ENCODE measurements at regions of chr19 and their contacts with region 1.

Region 1: GRCh38 chr19:12551060-12551832 is at the start of gene ZNF564:
- DNase-seq: peak; percentile 93
- H3K4me3 Mint-ChIP-seq: peak within 1 kb of the TSS; percentile 94
- H3K27ac Mint-ChIP-seq: peak within 1 kb of the TSS; percentile 90
- H3K4me1 Mint-ChIP-seq: peaks cover 19% of the 10 kb centered on the region
- H3K27me3 Mint-ChIP-seq: no peaks in the 10 kb centered on the region
- total RNA-seq, gene ZNF564: 7.4 and 7.6 TPM in 2 replicates

Region 2: GRCh38 chr19:12294249-12295158 is 256.7 kb before region 1 on chr19 and contains the start of gene ZNF44:
- intact Hi-C with region 1: loop called (anchors 1 kb)
- DNase-seq: peak; percentile 96
- H3K4me3 Mint-ChIP-seq: peak within 1 kb of the TSS; percentile 100
- H3K27ac Mint-ChIP-seq: peak within 1 kb of the TSS; percentile 99
- H3K4me1 Mint-ChIP-seq: peaks cover 22% of the 10 kb centered on the region
- H3K27me3 Mint-ChIP-seq: no peaks in the 10 kb centered on the region
- total RNA-seq, gene ZNF44: 8.6 and 8.7 TPM in 2 replicates

Region 3: GRCh38 chr19:12440541-12441316 is 110.5 kb before region 1 on chr19 and contains the start of gene ZNF443:
- intact Hi-C with region 1: loop called (anchors 2 kb)
- DNase-seq: peak; percentile 99
- H3K4me3 Mint-ChIP-seq: peak within 1 kb of the TSS; percentile 100
- H3K27ac Mint-ChIP-seq: peak within 1 kb of the TSS; percentile 97
- H3K4me1 Mint-ChIP-seq: peaks cover 9% of the 10 kb centered on the region
- H3K27me3 Mint-ChIP-seq: no peaks in the 10 kb centered on the region
- total RNA-seq, gene ZNF443: 4.3 and 4.5 TPM in 2 replicates

Region 4: DNA sequence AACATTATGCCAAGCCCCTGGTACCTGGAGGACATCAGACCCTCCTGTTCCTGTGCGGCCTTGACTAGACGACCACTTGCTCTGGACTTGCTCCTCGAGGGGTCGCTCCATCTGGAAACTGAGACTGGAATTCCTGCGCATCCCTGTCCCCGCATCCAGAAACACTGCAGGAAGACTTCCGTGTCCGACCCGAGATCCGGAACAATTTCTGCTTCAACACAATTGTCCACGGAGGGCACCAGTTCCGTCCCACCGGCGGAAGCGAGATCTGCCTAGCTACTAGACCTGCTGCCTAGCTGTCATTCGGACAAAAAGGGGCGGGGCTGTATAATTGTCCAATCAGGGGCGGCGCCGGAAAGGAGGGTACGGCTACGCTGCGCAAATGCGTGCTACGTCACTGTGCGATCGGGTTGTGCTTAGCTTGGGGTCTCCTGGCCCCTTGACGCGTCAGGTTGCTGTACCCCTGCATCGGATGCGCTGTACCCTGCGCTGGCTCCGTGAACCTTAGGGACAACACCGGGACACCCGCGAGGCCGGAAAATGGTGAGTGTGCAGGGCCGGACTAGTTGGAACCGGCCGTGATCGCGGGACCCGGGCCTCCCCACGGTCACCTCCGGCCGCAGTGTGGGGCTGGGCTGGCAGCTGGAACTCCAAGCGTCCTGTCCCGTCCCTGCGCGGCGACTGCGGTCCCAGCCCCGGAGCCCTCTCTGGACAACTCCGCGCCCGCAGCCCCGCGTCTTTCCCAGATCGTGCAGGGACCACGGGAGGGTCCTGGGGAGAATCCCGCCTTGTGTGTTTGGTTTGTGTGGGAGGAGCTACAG is 59.5 kb after region 1 on chr19 and contains the starts of genes ZNF490 and ZNF791:
- intact Hi-C with region 1: loop called (anchors 2 kb)
- DNase-seq: peak; percentile 95
- H3K4me3 Mint-ChIP-seq: peak within 1 kb of the TSS; percentile 99
- H3K27ac Mint-ChIP-seq: peak within 1 kb of the TSS; percentile 97
- H3K4me1 Mint-ChIP-seq: peaks cover 18% of the 10 kb centered on the region
- H3K27me3 Mint-ChIP-seq: no peaks in the 10 kb centered on the region
- total RNA-seq, gene ZNF490: 7.0 and 9.9 TPM in 2 replicates
- total RNA-seq, gene ZNF791: 21.8 and 22.5 TPM in 2 replicates

Region 5: GRCh38 chr19:12847159-12848139 is 296.2 kb after region 1 on chr19:
- intact Hi-C with region 1: loop called (anchors 10 kb)
- DNase-seq: peak; percentile 78
- H3K4me3 Mint-ChIP-seq: peak overlapping the region; percentile 65
- H3K27ac Mint-ChIP-seq: no peak overlapping the region
- H3K4me1 Mint-ChIP-seq: peaks cover 9% of the 10 kb centered on the region
- H3K27me3 Mint-ChIP-seq: peaks cover 10% of the 10 kb centered on the region

Measured in activated T-helper 2 cell treated with anti-CD3 and anti-CD28 coated beads, Interferon-gamma antibody, Interleukin-2, Interleukin-4, amounts not matched to agents 10 μg/mL and 5 μg/mL and 100 μg/mL, durations not matched to agents 14 hours and 24 hours and 36 hours (primary cell).